CD8-positive, alpha-beta memory T cell (primary cell): ENCODE measurements at regions of chr10 and their contacts with region 1.

Region 1: DNA sequence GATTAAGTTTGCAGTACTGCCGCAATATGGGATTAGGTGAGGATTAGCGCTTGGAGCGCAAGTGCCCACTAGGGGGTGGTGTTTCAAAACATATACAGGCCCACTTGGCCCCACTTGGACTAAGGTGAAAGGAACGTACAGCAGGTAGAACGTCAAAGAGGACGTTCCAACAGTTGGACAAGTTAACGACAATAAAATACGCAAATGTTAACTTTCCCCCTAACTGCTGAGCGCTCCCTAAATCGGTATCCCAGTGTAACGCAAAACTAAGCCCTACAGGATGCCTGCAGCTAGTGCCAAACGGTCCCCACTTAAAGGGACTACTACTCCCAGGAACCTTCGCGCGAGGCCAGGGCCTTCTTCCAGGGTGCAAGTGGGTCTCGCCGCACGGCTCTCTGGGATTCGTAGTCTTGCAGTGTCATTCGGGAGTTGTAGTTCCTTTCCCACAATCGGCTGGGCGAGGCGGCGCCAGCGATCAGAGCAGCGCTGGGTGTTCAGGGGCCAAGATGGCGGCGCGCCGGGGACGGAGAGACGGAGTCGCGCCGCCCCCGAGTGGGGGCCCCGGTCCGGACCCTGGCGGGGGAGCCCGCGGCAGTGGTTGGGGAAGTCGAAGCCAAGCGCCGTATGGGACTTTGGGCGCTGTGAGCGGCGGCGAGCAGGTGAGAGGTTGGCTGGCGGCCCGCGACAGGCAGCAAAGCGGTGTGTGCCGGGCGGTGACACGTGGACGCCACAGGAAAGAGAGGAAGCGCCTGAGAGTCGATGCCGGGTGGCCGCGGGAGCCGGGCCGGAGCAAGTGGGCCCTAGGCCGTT is at the start of gene PPRC1:
- DNase-seq: peak; percentile 94 to 98 (median 96)
- H3K4me3 ChIP-seq: peak within 1 kb of the TSS; percentile 91
- H3K4me3 Mint-ChIP-seq: peak within 1 kb of the TSS; percentile 92 to 100 (median 98)
- H3K27ac ChIP-seq: peak within 1 kb of the TSS; percentile 75
- H3K27ac Mint-ChIP-seq: peak within 1 kb of the TSS; percentile 89 to 99 (median 96)
- H3K4me1 ChIP-seq: peaks cover 30% of the 10 kb centered on the region
- H3K4me1 Mint-ChIP-seq: peaks cover 38 to 50% (median 40%) of the 10 kb centered on the region in 3 donors
- H3K27me3 ChIP-seq: no peaks in the 10 kb centered on the region
- H3K27me3 Mint-ChIP-seq: no peaks in the 10 kb centered on the region
- total RNA-seq, gene PPRC1: 105 to 106 TPM

Region 2: GRCh38 chr10:102114861-102115618 is 17.7 kb before region 1 on chr10:
- CTCF ChIA-PET with region 1: interaction called, 14 read pairs
- POLR2A ChIA-PET with region 1: interaction called, 4 read pairs
- DNase-seq: peak; percentile 67 to 85 (median 79)
- H3K4me3 ChIP-seq: peak overlapping the region; percentile 73
- H3K4me3 Mint-ChIP-seq: peak overlapping the region; percentile 86 to 97 (median 91)
- H3K27ac ChIP-seq: peak overlapping the region; percentile 48
- H3K27ac Mint-ChIP-seq: peak overlapping the region; percentile 84 to 98 (median 92)
- H3K4me1 ChIP-seq: peaks cover 72% of the 10 kb centered on the region
- H3K4me1 Mint-ChIP-seq: peaks cover 66 to 79% (median 67%) of the 10 kb centered on the region in 3 donors
- H3K27me3 ChIP-seq: no peaks in the 10 kb centered on the region
- H3K27me3 Mint-ChIP-seq: no peaks in the 10 kb centered on the region

Region 3: GRCh38 chr10:102122450-102122849 is 10.3 kb before region 1 on chr10:
- CTCF ChIA-PET with region 1: interaction called, 13 read pairs
- POLR2A ChIA-PET with region 1: interaction called, 4 read pairs
- DNase-seq: no peak
- H3K4me3 ChIP-seq: no peak overlapping the region
- H3K4me3 Mint-ChIP-seq: peak overlapping the region in 6 of 7 donors; percentile 24 to 94 (median 83)
- H3K27ac ChIP-seq: no peak overlapping the region
- H3K27ac Mint-ChIP-seq: peak overlapping the region; percentile 14 to 98 (median 52)
- H3K4me1 ChIP-seq: peaks cover 34% of the 10 kb centered on the region
- H3K4me1 Mint-ChIP-seq: peaks cover 30 to 47% (median 45%) of the 10 kb centered on the region in 3 donors
- H3K27me3 ChIP-seq: no peaks in the 10 kb centered on the region
- H3K27me3 Mint-ChIP-seq: no peaks in the 10 kb centered on the region

Region 4: DNA sequence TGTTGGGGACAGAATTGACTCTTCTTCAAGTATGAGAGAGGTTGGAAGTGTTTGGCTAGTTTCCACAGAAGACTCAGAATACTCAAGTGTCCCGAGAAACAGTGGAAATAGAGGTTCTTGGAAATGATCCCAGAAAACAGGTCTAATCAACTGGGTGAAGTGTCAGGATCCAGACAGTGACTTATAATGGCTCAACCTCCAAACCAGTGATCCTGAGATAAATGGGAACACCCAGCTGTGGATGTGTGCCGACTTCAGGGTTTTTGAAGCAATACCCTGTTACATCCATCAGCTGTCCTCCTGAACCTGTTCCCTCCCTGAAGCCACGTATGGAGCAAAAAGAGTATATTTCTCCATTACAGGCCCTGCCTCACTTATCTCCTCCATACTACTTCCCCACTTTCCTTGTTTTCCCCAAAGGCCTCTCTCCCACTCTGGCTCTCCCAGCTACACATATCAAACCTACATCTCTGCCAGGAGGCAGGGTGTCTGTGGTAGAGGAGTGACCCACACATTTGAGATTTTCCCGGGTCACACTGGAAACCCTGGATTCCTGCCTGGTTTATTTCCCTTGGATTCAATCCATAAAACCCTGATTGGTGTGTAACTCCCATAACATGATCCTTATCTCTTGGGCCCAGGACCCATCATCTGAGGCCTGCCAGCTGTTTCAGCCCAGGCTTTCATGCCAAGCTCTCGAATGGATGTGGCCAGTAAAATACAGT is 75.7 kb after region 1 on chr10:
- CTCF ChIA-PET with region 1: no interaction called
- POLR2A ChIA-PET with region 1: no interaction called
- DNase-seq: no peak
- H3K4me3 ChIP-seq: no peak overlapping the region
- H3K4me3 Mint-ChIP-seq: no peak overlapping the region
- H3K27ac ChIP-seq: no peak overlapping the region
- H3K27ac Mint-ChIP-seq: no peak overlapping the region
- H3K4me1 ChIP-seq: no peaks in the 10 kb centered on the region
- H3K4me1 Mint-ChIP-seq: no peaks in the 10 kb centered on the region
- H3K27me3 ChIP-seq: no peaks in the 10 kb centered on the region
- H3K27me3 Mint-ChIP-seq: peaks cover 0 to 6% of the 10 kb centered on the region in 2 donors